ENCODE measurements at regions of chr1 and their contacts with region 1.

Region 1: DNA sequence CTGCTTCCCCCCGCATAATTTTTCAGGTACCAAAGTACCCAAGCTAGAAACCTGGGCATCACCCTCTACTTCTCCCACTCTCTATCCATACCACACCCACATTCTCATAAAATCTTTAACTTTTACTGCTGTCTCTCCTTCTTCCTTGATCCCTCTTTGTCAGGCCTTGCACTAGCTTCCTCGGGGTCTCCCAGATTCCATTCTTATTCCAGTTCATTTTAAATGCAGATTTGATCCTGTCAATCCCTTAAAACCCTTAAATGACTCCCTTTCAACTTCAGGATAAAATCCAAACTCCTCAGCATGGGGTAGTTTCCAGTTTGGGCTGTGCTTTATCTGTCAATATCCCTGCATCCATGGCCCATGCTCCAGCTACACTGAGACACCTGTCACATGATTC is 343.5 kb downstream of the PBX1 start:
- DNase-seq: no peak
- H3K4me3 ChIP-seq: no peak overlapping the region
- H3K27ac ChIP-seq: no peak overlapping the region
- H3K4me1 ChIP-seq: peaks cover 0 to 5% (median 2%) of the 10 kb centered on the region in 4 experiments; a peak in 3 of 7 replicates
- H3K27me3 ChIP-seq: no peaks in the 10 kb centered on the region
- CTCF ChIP-seq: no peak
- EP300 ChIP-seq: no peak
- POLR2A ChIP-seq: no peak
- RAD21 ChIP-seq: no peak

Region 2: GRCh38 chr1:164891612-164892011 is 10.9 kb before region 1 on chr1:
- CTCF ChIA-PET with region 1: interaction called, 22 read pairs
- POLR2A ChIA-PET with region 1: no interaction called
- DNase-seq: no peak
- H3K4me3 ChIP-seq: no peak overlapping the region
- H3K27ac ChIP-seq: no peak overlapping the region
- H3K4me1 ChIP-seq: peaks cover 0 to 5% (median 0%) of the 10 kb centered on the region in 4 experiments; a peak in 1 of 7 replicates
- H3K27me3 ChIP-seq: no peaks in the 10 kb centered on the region
- CTCF ChIP-seq: peak in 2 of 3 experiments; percentile 11 to 15; a peak in 2 of 4 replicates
- EP300 ChIP-seq: no peak
- POLR2A ChIP-seq: no peak
- RAD21 ChIP-seq: peak; percentile 46 to 54; a peak in 3 of 4 replicates

Region 3: DNA sequence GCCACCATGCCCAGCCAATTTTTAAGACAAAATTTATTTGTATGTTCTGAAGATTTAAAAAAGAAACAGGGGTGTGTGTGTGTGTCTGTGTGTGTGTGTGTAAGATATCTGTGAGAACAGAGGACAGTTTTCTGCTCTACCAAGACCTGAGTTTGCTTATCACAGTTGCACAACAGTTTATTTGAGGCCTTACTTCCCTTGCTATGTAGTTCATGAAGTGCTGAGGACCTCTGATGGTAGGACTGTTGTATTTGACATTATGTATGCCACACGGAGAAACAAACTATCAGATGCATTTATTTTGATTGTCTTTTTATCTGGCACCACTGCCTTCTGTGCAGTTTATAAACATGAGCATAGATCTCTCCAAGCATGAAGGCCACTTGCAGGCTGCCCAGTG is 11.7 kb after region 1 on chr1:
- CTCF ChIA-PET with region 1: no interaction called
- POLR2A ChIA-PET with region 1: no interaction called
- DNase-seq: no peak
- H3K4me3 ChIP-seq: no peak overlapping the region
- H3K27ac ChIP-seq: no peak overlapping the region
- H3K4me1 ChIP-seq: no peaks in the 10 kb centered on the region
- H3K27me3 ChIP-seq: no peaks in the 10 kb centered on the region
- CTCF ChIP-seq: peak in 1 of 3 experiments; percentile 30; a peak in 1 of 4 replicates
- EP300 ChIP-seq: no peak
- POLR2A ChIP-seq: no peak
- RAD21 ChIP-seq: peak; percentile 45 to 55

Region 4: DNA sequence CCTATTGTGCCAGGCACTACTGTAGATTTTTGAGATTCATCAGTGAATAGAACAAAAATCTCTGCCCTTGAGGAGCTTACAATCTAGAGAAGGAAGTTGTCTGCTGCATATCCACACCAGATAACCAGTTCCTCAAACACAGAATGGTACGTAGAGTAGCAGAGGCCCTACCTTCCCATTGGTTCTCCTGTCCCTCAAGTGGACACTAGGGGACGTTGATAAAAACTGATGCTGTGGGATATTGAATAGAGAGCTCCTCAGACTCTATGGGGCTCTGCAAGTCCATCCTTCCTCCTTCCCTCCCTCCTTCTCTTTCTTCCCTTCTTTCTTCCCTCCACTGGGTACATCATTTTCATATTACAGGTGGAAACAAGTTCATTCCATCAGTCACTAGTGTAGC is 27.8 kb after region 1 on chr1:
- CTCF ChIA-PET with region 1: no interaction called
- POLR2A ChIA-PET with region 1: no interaction called
- DNase-seq: no peak
- H3K4me3 ChIP-seq: no peak overlapping the region
- H3K27ac ChIP-seq: no peak overlapping the region
- H3K4me1 ChIP-seq: no peaks in the 10 kb centered on the region; a peak in 1 of 7 replicates
- H3K27me3 ChIP-seq: no peaks in the 10 kb centered on the region
- CTCF ChIP-seq: peak in 1 of 3 experiments; percentile 13; a peak in 1 of 4 replicates
- EP300 ChIP-seq: no peak
- POLR2A ChIP-seq: no peak
- RAD21 ChIP-seq: peak in 1 of 2 experiments; percentile 5; a peak in 2 of 4 replicates